Cardiac septum (tissue), 1 donor: ENCODE measurements at regions of chrX and their contacts with region 1.

Region 1: GRCh38 chrX:131841496-131842410 is 181.3 kb upstream of the STK26 start:
- DNase-seq: no peak

Region 2: DNA sequence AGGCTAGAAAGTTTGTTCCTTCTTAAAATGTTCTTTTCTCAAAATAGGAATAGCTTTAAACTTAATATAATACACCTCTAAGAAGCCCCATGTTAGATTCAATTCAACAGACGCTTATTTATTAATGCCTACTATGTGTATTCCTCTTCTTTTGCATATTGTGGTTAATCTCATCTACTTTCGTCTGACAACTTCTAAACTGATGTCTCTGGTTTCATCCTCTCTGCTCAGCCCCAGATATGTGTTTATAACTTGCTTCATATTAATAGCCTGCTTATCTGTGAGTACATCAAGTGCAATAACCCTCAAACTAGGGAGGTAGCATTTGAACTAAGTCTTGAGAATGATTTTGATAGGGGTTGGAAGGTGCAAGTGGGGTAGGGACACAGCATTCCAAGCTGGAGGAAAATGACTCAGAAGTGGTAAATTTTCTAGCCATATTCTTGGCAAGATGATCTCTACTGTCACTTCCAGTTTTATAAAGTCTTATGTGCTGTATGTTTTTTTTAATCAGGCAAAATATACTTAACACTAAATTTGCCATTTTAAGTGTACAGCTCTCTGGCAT is 218.3 kb after region 1 on chrX:
- intact Hi-C with region 1: loop called (anchors 10 kb)
- DNase-seq: no peak

Region 3: GRCh38 chrX:132631579-132632232 is 790.0 kb after region 1 on chrX:
- intact Hi-C with region 1: loop called (anchors 10 kb)
- DNase-seq: no peak